Head of caudate nucleus (tissue), 42 donors: ENCODE measurements at regions of chr3 and their contacts with region 1.

Region 1: GRCh38 chr3:71955240-71956068 is 170.5 kb upstream of the PROK2 start:
- DNase-seq: peak; percentile 69 to 95 (median 86)

Region 2: DNA sequence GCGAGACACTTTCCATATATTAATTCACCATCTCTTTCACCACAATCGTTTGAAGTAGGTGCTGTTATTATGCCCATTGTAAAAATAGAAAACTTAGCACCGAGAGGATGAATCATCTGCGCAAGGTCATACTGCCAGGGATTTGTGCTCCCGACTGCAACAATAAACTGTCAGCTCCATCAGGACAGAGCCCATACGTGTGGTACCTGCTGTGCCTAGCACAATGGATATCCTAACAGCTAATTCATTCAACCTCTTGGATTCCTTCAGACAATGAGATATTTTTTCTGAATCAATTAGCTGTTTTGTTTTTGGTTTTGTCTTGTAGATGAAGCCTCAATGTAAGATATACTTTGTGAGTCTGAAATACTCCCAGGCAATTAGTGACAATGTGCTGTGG is 138.2 kb before region 1 on chr3:
- intact Hi-C with region 1: no loop called
- DNase-seq: no peak

Region 3: DNA sequence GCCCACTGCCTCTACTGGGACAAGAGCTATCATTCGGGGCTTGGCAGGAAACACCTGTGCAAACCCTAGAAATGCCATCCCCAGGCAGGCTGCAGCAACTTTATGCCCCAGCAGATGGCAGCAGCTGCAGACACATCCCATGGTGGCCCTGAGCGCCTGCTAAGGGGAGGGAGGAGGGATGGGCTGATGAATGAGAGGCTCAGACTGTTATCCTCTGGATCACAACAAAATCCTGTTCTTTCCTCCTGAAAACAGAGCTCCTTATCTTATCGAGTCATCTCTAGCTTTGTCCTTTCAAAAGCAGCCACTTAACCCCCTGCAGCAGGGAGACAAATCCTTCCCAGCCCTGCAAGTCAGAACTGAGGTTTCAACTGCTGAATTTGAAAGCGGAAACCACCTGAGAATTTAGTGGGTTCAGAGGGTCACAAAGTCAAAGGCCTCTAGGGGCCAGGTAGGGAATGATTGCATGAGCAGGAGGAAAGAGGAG is 80.0 kb before region 1 on chr3:
- intact Hi-C with region 1: loop called (anchors 10 kb)
- DNase-seq: peak; percentile 77 to 93 (median 86)

Region 4: GRCh38 chr3:72058493-72059081 is 103.1 kb after region 1 on chr3:
- intact Hi-C with region 1: no loop called
- DNase-seq: peak in 24 of 42 donors; percentile 5 to 63 (median 26)

Region 5: DNA sequence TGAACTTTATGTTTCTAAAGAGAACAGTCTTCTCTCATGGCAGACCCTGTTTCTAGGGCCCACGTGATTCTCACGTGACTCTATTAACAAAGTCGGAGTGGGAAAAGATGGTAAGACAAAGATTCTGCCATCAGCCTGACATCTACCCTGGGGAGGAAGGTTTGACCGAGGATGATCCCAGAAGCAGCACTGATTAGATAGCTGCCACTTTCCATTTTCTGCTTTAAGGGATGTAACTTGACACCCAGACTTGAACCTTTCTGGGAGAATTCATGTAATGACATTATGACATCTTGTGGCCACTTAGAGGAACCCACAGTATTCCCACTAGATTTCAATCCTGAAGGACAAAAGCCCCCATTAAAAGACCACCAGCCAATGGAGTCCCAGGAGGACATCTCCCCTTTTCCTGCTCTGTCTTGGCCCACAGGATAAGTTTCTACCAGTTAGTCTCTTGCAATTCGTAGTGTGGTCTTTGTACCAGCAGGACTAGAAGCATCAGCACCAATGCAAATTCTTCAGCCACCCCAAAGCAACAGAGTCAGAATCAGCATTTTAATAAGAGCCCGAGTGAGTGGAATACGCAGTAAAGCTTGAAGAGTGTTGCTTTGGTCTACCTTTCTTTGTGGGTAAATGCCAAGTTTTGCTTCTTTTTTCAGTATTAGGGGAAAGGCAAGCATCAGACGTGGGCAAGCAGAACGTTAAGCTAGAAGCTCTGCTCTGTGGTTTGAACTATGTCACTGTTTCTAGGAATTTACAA is 310.0 kb after region 1 on chr3:
- intact Hi-C with region 1: loop called (anchors 10 kb)
- DNase-seq: no peak

Region 6: GRCh38 chr3:72665701-72666443 is 710.4 kb after region 1 on chr3:
- intact Hi-C with region 1: loop called (anchors 10 kb)
- DNase-seq: peak in 20 of 42 donors; percentile 13 to 81 (median 36)